ENCODE measurements at regions of chr2 and their contacts with region 1.

Region 1: GRCh38 chr2:209556354-209556961 is 132.6 kb downstream of the MAP2 start:
- DNase-seq: no peak
- H3K4me3 ChIP-seq: no peak overlapping the region
- H3K27ac ChIP-seq: no peak overlapping the region
- H3K4me1 ChIP-seq: no peaks in the 10 kb centered on the region
- H3K27me3 ChIP-seq: no peaks in the 10 kb centered on the region
- CTCF ChIP-seq: peak; percentile 67

Region 2: GRCh38 chr2:209423562-209424198 is 132.8 kb before region 1 on chr2 and contains the start of gene MAP2:
- intact Hi-C with region 1: loop called (anchors 1 kb)
- DNase-seq: peak; percentile 80
- H3K4me3 ChIP-seq: peak within 1 kb of the TSS; percentile 78
- H3K27ac ChIP-seq: peak within 1 kb of the TSS; percentile 59
- H3K4me1 ChIP-seq: peaks cover 26% of the 10 kb centered on the region
- H3K27me3 ChIP-seq: no peaks in the 10 kb centered on the region
- CTCF ChIP-seq: peak; percentile 97
- total RNA-seq, gene MAP2: 6.2 TPM

Region 3: DNA sequence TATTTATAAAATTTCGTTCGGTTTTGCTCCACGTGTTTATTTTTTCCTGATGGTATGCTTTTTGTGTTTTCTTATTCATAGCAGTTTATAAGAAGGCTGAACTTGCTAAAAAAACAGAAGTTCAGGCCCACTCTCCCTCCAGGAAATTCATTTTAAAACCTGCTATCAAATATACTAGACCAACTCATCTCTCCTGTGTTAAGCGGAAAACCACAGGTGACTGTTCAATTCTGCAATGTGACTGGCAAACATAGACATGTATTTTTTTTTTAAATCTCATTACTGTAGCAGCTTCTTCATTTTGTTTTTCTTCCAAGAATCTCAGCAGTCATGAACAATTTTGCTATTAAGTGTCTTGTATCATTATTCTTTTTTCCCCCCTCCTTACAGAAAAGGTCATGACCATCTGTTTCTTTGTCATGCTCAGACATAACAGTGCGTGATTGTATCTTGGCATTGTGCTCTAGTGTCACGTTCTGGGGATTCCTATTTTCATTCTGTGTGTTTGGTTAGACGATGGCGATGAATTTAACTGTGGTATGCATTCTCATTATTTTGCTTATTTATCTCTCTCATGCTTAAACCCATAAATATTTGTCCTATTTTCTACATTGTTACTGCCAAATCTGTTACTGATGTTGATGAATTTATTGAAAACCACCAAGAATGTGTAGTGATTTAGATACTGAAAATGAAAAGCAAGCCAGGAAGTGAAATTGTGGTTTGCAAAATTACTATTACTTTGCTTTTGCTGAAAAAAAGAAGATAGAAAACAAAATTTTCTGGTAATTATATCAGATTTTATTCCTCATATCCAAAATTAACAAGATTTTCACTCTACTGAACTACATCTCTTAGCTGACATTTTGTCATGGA is 140.6 kb after region 1 on chr2:
- intact Hi-C with region 1: no loop called
- DNase-seq: no peak
- H3K4me3 ChIP-seq: no peak overlapping the region
- H3K27ac ChIP-seq: no peak overlapping the region
- H3K4me1 ChIP-seq: no peaks in the 10 kb centered on the region
- H3K27me3 ChIP-seq: no peaks in the 10 kb centered on the region
- CTCF ChIP-seq: no peak

Measured in left ventricle myocardium inferior (tissue), 1 donor.